AG04450 (cell line): ENCODE measurements at regions of chr1 and their contacts with region 1.

Region 1: DNA sequence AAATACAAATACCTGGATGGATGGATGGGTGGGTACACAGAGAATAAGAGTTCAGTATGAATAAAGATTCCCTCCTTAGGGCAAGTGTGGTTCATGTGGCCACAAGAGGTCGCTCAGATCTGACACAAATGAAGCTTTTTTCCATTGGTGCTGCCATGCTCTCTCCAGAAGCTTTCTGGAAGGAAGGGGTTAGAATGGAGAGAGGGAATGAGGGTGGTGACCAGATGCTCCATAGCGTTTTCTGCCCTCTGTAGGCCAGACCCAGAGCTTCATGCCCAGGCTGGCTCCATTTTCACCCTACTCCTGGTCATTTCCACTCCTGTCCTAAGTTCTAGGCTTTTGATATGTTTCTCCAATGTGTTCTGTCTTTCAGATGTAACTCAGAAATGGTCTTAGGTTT is 3.3 kb upstream of the FCRL6 start:
- DNase-seq: peak; percentile 66
- H3K4me3 ChIP-seq: no peak overlapping the region
- H3K27ac ChIP-seq: no peak overlapping the region
- H3K27me3 ChIP-seq: peaks cover 26% of the 10 kb centered on the region
- CTCF ChIP-seq: peak; percentile 81

Region 2: DNA sequence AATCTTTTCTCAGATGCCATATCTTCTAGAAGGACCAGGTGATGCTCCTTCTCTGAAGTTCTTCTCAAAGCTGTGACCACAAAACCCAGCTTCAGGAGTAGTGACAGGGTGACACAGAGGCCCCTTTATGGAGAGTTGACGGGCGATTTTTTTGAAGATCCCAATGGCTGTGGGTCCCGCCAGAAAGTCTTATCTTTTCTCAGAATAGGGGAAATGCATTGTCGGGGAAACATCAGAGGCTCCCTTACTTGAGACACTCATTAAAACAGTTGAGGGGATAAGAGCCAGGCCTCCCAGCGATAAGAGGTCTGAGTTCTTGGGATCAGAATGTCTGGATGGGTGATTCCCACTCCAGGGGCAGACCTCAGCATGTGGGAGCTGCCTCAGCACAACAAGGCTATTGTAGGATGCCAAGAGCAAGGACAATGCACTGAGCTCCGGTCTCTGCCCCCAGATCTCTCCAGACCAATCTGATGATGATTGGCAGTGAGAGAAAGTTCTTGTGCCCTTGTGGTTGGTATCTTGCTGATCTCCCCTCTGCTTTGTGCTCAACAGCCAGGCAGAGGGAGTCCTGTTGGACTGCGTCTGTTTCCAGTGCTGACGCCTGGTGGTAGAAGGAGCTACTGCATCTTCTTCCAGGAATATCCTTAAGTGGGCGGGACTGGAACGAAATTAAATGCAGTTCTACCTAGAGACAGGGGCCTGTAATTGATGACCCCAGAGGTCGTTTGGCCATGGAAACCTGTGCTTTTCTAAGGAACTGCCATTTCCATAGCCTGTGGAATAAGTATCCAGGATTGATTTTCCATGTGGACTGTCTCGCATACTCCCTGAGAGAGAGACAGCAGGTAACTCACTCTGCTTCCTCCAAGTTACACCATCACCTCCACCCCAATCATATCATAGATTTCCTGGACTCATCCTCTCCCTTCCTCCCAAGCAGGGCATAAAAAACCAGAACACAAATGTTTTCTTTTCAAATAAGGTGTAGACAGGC is 601.0 kb before region 1 on chr1:
- CTCF ChIA-PET with region 1: no interaction called
- POLR2A ChIA-PET with region 1: no interaction called
- DNase-seq: peak; percentile 26
- H3K4me3 ChIP-seq: no peak overlapping the region
- H3K27ac ChIP-seq: no peak overlapping the region
- H3K27me3 ChIP-seq: no peaks in the 10 kb centered on the region
- CTCF ChIP-seq: peak; percentile 98

Region 3: GRCh38 chr1:159780583-159781582 is 18.0 kb before region 1 on chr1 and contains the start of gene DUSP23:
- CTCF ChIA-PET with region 1: interaction called, 40 read pairs
- POLR2A ChIA-PET with region 1: no interaction called
- DNase-seq: peak; percentile 94
- H3K4me3 ChIP-seq: peak within 1 kb of the TSS; percentile 74
- H3K27ac ChIP-seq: no peak within 1 kb of the TSS
- H3K27me3 ChIP-seq: peaks cover 4% of the 10 kb centered on the region
- CTCF ChIP-seq: peak; percentile 96
- polyA plus RNA-seq, gene DUSP23: 6.0 and 6.1 TPM in 2 replicates

Region 4: GRCh38 chr1:159821171-159821867 is 22.4 kb after region 1 on chr1:
- CTCF ChIA-PET with region 1: interaction called, 63 read pairs
- POLR2A ChIA-PET with region 1: no interaction called
- DNase-seq: peak; percentile 7
- H3K4me3 ChIP-seq: no peak overlapping the region
- H3K27ac ChIP-seq: no peak overlapping the region
- H3K27me3 ChIP-seq: peaks cover 11% of the 10 kb centered on the region
- CTCF ChIP-seq: peak; percentile 71

Region 5: DNA sequence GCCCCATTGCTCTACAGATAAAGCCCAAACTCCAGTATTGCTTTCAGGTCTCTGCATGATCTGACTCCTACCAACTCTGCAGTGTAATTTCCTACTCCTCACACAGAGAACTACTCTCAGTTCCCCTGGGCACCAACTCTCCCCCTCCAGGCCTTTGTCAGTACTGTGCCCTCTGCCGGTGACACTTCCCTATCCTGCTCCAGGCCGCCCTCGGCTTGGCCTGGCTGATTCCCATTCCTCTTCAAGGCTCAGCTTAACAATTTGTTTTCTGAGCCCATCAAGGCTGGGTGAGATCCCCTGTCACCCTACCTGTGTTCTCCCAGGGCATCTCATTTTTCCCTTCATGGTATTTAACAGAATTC is 30.4 kb after region 1 on chr1:
- CTCF ChIA-PET with region 1: interaction called, 63 read pairs
- POLR2A ChIA-PET with region 1: no interaction called
- DNase-seq: no peak
- H3K4me3 ChIP-seq: no peak overlapping the region
- H3K27ac ChIP-seq: no peak overlapping the region
- H3K27me3 ChIP-seq: peaks cover 4% of the 10 kb centered on the region
- CTCF ChIP-seq: peak; percentile 18

Region 6: GRCh38 chr1:159854693-159855192 is 55.9 kb after region 1 on chr1:
- CTCF ChIA-PET with region 1: interaction called, 21 read pairs
- POLR2A ChIA-PET with region 1: no interaction called
- DNase-seq: peak; percentile 42
- H3K4me3 ChIP-seq: peak overlapping the region; percentile 64
- H3K27ac ChIP-seq: peak overlapping the region; percentile 89
- H3K27me3 ChIP-seq: no peaks in the 10 kb centered on the region
- CTCF ChIP-seq: no peak

Region 7: DNA sequence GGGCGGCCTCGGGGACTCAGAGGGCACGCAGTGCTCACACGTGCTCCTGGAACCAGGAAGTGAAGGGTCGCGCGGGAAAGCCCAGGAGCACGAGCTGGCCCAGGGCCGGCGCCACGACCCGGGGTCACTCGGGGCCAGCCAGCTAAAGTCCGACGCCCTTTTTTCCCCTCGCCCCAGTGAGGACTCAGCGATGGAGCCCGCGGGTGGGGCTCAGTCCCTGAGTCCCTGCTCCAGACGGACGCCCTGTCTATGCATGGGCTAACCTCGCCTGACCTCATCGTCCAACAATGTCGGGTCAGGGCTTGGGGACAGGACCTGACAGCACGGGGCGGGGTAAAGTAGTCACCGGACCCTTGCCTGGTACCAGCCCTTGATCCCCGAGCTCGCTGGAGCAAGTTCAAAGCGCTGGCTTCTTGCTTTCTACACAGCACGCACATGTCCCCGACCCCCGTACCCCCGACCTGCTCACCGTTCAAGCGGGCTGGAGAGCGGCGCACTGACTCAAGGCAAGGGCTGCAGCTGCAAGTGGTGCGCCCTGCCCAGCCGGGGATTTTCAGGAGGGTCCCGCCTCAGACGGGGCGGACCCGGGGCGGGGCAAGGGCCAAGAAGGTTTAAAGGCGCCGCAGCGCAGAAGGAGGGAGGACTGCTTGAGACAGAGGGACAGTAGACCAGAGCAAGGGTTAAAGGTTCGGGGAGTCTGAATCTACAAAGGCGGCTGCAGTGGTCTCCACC is 126.3 kb after region 1 on chr1 and contains the start of gene TAGLN2:
- CTCF ChIA-PET with region 1: interaction called, 17 read pairs
- POLR2A ChIA-PET with region 1: no interaction called
- DNase-seq: peak; percentile 85
- H3K4me3 ChIP-seq: peak within 1 kb of the TSS; percentile 97
- H3K27ac ChIP-seq: peak within 1 kb of the TSS; percentile 97
- H3K27me3 ChIP-seq: no peaks in the 10 kb centered on the region
- CTCF ChIP-seq: no peak
- polyA plus RNA-seq, gene TAGLN2: 400 and 472 TPM in 2 replicates

Region 8: DNA sequence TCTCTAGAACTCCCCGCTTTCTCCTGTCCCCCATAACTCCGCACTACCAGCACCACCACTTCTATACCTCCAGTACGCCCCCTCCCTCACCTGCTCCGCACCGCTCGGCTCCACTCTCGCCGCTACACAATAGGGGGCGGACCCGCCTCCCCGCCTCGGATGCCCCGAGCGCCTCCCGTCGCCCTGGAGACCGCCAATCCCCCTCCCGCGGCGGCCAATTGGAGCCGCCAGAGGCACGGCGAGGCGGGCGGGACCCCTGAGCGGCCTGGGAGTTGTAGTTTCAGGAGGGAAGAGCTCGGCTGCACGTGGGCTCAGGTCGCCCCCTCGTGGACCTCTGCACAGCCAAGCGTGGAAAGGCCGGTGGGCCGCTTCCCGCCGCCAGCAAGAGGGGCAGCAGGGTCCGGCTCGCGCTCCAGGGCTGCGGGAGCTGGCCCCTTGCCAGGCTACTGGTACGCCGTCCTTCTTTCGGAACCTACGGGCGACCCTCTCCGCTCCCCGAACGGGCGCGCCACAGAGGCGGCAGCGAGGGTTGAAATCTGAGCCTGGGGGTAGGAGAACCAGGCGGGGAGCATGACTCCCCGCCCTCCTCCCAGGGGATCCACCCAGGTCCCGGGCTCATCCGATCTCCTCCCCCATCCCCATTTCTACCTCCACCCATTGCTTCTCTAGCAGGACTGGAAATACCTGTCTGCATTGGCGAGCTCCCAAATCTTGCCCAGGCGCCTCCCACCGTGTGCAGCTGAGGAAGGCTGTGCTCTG is 146.8 kb after region 1 on chr1 and contains the start of gene IGSF9:
- CTCF ChIA-PET with region 1: interaction called, 12 read pairs
- POLR2A ChIA-PET with region 1: no interaction called
- DNase-seq: no peak
- H3K4me3 ChIP-seq: peak within 1 kb of the TSS; percentile 47
- H3K27ac ChIP-seq: no peak within 1 kb of the TSS
- H3K27me3 ChIP-seq: peaks cover 55% of the 10 kb centered on the region
- CTCF ChIP-seq: peak; percentile 43
- polyA plus RNA-seq, gene IGSF9: not detected in 2 replicates